ENCODE measurements at regions of chr1 and their contacts with region 1.

Region 1: GRCh38 chr1:179867807-179868330 is 9.7 kb downstream of the TOR1AIP2 start:
- DNase-seq: peak; percentile 52
- CTCF ChIP-seq: peak; percentile 71

Region 2: DNA sequence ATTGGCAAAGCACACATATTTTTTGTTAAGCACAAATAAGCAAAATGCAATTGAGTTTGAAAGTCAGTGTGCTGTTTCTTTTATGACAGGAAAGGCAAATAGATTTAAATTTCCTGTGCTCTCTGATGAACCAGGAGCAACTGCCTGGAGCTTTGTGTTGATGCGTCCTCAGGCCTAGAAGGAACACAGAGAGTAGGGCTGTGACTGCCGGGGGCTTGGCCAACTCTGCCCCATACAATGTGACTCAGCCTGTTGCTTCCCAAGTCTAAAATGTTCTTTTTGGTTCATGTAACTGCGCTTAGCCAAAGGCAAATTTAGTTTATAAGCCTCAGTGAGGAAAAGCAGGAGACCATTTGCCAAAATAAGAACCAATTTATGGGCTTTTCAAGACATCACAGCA is 27.8 kb before region 1 on chr1:
- CTCF ChIA-PET with region 1: interaction called, 19 read pairs
- POLR2A ChIA-PET with region 1: no interaction called
- DNase-seq: no peak
- CTCF ChIP-seq: no peak

Region 3: DNA sequence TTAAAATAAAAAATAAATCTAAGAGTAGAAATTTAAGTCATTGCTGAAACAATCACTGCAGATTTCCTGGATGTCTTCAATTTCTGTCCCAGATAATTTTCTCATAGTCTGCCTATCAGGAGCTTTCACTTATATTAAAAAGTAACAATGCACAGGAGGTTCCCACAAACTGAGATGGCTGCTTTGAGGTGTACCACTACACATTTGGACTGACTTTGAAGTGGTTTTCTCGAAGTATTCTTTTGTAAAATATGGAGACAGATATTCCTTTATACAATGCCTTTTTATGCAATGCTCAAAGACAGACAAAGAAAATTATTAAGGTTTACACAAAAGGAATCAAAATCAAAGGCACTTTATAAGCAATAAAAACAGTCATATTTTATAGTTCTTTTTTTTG is 14.8 kb before region 1 on chr1:
- CTCF ChIA-PET with region 1: interaction called, 11 read pairs
- POLR2A ChIA-PET with region 1: no interaction called
- DNase-seq: no peak
- CTCF ChIP-seq: no peak

Measured in GM10248 (cell line).